PC-9 (cell line): ENCODE measurements at regions of chr12 and their contacts with region 1.

Region 1: DNA sequence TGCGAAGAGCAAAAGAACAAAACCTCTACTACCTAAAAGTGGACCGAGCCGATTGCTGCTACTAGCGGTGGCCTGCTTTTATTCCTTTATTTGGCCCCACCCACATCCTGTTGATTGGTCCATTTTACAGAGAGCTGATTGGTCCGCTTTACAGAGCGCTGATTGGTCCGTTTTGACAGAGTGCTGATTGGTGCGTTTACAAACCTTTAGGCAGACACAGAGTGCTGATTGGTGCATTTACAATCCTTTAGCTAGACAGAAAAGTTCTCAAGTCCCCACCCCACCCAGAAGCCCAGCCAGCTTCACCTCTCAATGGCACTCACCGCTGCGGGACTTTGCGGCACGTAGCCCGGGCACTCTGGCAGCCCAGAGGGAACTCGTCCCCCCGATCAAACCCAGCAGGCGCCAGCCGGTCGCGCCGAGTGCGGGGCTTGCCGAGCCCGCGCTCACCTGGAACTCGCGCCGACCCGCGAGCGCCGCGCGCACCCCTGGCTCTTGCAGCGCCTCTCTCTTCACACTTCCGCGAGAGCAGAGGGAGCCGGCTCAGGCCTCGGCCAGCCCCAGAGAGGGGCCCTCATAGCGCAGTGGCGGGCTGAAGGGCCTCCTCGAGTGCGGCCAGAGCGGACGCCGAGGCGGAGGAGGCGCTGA is 8.7 kb upstream of the FGD4 start:
- DNase-seq: peak; percentile 49 to 69
- H3K4me3 ChIP-seq: peak overlapping the region; percentile 60
- H3K27ac ChIP-seq: no peak overlapping the region
- H3K4me1 ChIP-seq: no peaks in the 10 kb centered on the region; the same call in 1 of the 2 replicates
- H3K27me3 ChIP-seq: no peaks in the 10 kb centered on the region
- CTCF ChIP-seq: no peak

Region 2: GRCh38 chr12:31922341-31923062 is 468.2 kb before region 1 on chr12:
- CTCF ChIA-PET with region 1: no interaction called
- POLR2A ChIA-PET with region 1: no interaction called
- intact Hi-C with region 1: no loop called
- DNase-seq: no peak
- H3K4me3 ChIP-seq: no peak overlapping the region
- H3K27ac ChIP-seq: no peak overlapping the region
- H3K4me1 ChIP-seq: no peaks in the 10 kb centered on the region
- H3K27me3 ChIP-seq: no peaks in the 10 kb centered on the region
- CTCF ChIP-seq: no peak

Region 3: DNA sequence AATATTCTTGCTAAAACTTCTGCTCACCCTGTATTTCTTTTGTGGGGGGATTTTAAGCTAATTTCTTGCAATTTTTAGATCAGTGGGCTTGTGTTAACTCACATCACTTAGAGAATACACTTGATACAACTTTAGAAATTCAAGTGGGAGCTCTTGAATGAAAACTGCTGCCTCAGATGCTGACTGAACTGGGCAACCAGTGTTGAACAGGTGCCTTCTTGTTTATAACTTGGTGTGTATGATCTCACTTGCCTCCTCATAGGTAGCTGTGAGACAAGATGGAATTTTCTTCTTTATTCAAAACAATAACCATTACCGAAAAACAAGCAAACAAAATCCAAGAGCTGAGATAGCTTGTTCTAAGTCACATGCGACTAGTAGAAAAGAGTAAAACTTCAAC is 72.2 kb after region 1 on chr12:
- CTCF ChIA-PET with region 1: no interaction called
- POLR2A ChIA-PET with region 1: interaction called, 17 read pairs
- intact Hi-C with region 1: no loop called
- DNase-seq: no peak
- H3K4me3 ChIP-seq: no peak overlapping the region
- H3K27ac ChIP-seq: no peak overlapping the region
- H3K4me1 ChIP-seq: no peaks in the 10 kb centered on the region
- H3K27me3 ChIP-seq: no peaks in the 10 kb centered on the region
- CTCF ChIP-seq: no peak

Region 4: DNA sequence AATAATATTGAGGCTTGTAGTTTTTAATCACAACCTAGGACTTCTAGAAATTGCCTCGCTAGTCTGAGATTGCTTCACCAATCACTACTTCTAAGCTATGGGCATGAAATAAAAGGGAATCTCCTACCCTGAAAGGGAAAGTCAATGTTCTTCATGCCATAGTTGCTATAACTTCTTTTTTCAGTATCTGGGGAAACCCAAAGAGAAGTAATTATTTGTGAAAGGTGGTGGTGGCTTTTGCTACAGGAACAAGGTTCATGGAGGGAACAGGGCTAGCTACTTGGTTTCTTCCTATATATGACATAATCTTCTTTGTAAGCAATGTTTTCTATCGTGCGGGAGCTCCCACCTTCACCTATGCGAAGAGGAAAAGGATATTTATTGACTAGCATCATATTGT is 226.8 kb after region 1 on chr12:
- CTCF ChIA-PET with region 1: interaction called, 10 read pairs
- POLR2A ChIA-PET with region 1: no interaction called
- intact Hi-C with region 1: no loop called
- DNase-seq: no peak
- H3K4me3 ChIP-seq: no peak overlapping the region
- H3K27ac ChIP-seq: no peak overlapping the region
- H3K4me1 ChIP-seq: no peaks in the 10 kb centered on the region
- H3K27me3 ChIP-seq: no peaks in the 10 kb centered on the region
- CTCF ChIP-seq: no peak